Activated naive CD4-positive, alpha-beta T cell treated with anti-CD3 and anti-CD28 coated beads for 36 hours (primary cell): ENCODE measurements at regions of chr11 and their contacts with region 1.

Region 1: DNA sequence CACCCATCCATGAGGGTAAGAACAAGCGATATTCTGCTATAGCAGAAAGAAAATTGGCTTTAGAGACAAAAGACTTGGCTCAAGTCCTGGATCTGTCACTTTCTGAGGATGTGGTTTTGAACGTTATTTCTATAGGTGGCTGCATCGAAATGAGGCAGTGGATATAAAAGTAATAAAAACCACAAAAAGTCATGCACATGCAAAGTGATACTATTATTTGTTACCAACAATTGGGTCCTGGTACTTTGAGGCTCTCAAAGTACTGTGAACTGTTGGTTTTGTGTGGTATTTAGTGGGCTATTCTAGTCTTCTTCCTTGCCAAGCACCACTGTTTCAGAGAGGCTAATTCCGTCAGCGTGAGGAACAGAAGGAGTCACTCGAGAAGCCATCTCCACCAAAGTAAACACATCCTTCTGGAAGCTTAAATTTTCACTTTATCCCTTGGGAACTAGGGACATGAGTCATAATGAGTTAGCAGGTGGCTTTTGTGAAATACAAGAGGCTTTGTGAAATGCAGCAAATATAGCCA is 13.1 kb downstream of the UBASH3B start:
- DNase-seq: peak; percentile 27
- H3K4me3 Mint-ChIP-seq: no peak overlapping the region
- H3K27ac Mint-ChIP-seq: no peak overlapping the region
- H3K4me1 Mint-ChIP-seq: peaks cover 59% of the 10 kb centered on the region
- H3K27me3 Mint-ChIP-seq: no peaks in the 10 kb centered on the region

Region 2: DNA sequence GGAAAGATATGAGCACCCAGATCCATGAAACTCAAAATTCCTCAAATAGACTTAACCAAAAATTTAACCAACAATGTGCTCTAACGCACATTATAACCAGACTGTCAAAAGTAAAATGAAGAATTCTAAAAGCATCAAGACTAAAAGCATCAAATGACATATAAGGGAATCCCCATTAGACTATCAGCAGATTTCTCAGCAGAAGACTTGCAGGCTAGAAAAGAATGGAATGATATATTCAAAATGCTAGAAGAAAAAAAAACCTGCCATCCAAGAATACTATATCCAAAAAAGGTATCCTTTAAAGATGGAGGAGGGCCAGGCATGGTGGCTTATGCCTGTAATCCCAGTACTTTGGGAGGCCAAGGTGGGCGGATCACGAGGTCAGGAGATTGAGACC is 130.6 kb before region 1 on chr11:
- CTCF ChIA-PET with region 1: no interaction called
- intact Hi-C with region 1: no loop called
- DNase-seq: no peak
- H3K4me3 Mint-ChIP-seq: no peak overlapping the region
- H3K27ac Mint-ChIP-seq: no peak overlapping the region
- H3K4me1 Mint-ChIP-seq: no peaks in the 10 kb centered on the region
- H3K27me3 Mint-ChIP-seq: no peaks in the 10 kb centered on the region

Region 3: GRCh38 chr11:122697636-122698167 is 29.1 kb after region 1 on chr11:
- CTCF ChIA-PET with region 1: no interaction called
- intact Hi-C with region 1: loop called (anchors 1 kb)
- DNase-seq: peak; percentile 77
- H3K4me3 Mint-ChIP-seq: peak overlapping the region; percentile 50
- H3K27ac Mint-ChIP-seq: peak overlapping the region; percentile 78
- H3K4me1 Mint-ChIP-seq: peaks cover 77% of the 10 kb centered on the region
- H3K27me3 Mint-ChIP-seq: no peaks in the 10 kb centered on the region

Region 4: GRCh38 chr11:122772945-122773344 is 104.3 kb after region 1 on chr11:
- CTCF ChIA-PET with region 1: no interaction called
- intact Hi-C with region 1: loop called (anchors 2 kb)
- DNase-seq: no peak
- H3K4me3 Mint-ChIP-seq: no peak overlapping the region
- H3K27ac Mint-ChIP-seq: no peak overlapping the region
- H3K4me1 Mint-ChIP-seq: peaks cover 43% of the 10 kb centered on the region
- H3K27me3 Mint-ChIP-seq: no peaks in the 10 kb centered on the region

Region 5: GRCh38 chr11:123977731-123978347 is 1309.2 kb after region 1 on chr11 and contains the start of gene OR10S1:
- CTCF ChIA-PET with region 1: no interaction called
- intact Hi-C with region 1: no loop called
- DNase-seq: no peak
- H3K4me3 Mint-ChIP-seq: no peak within 1 kb of the TSS
- H3K27ac Mint-ChIP-seq: no peak within 1 kb of the TSS
- H3K4me1 Mint-ChIP-seq: no peaks in the 10 kb centered on the region
- H3K27me3 Mint-ChIP-seq: peaks cover 5% of the 10 kb centered on the region
- total RNA-seq, gene OR10S1: not detected